PC-9 (cell line): ENCODE measurements at regions of chr16 and their contacts with region 1.

Region 1: DNA sequence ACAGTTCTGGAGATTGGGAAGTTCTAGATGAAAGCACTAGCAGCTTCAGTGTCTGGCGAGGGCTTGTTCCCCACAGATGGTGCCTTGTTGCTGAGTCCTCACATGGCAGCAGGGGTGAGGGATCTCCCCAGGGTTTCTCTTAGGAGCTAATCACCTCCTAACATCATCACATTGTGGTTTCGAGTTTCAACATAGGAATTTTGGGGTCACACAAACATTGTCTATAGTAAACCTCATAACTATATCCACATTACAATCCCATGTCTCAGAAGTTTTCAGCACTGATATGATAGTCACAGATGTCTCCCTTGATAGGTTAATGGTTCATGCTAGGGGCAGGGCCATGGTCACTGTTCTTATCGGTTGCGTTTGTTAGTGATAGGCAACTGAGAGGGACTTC is 13.8 kb downstream of the CLUAP1 start:
- DNase-seq: peak; percentile 68 to 94
- H3K4me3 ChIP-seq: no peak overlapping the region
- H3K27ac ChIP-seq: peak overlapping the region; percentile 59
- H3K4me1 ChIP-seq: peaks cover 35% of the 10 kb centered on the region
- H3K27me3 ChIP-seq: no peaks in the 10 kb centered on the region
- CTCF ChIP-seq: no peak

Region 2: GRCh38 chr16:3274490-3274889 is 240.1 kb before region 1 on chr16:
- CTCF ChIA-PET with region 1: interaction called, 11 read pairs
- POLR2A ChIA-PET with region 1: no interaction called
- intact Hi-C with region 1: no loop called
- DNase-seq: peak in 1 of 2 experiments; percentile 37
- H3K4me3 ChIP-seq: no peak overlapping the region
- H3K27ac ChIP-seq: no peak overlapping the region
- H3K4me1 ChIP-seq: no peaks in the 10 kb centered on the region
- H3K27me3 ChIP-seq: no peaks in the 10 kb centered on the region; the same call in 1 of the 2 replicates
- CTCF ChIP-seq: no peak

Region 3: DNA sequence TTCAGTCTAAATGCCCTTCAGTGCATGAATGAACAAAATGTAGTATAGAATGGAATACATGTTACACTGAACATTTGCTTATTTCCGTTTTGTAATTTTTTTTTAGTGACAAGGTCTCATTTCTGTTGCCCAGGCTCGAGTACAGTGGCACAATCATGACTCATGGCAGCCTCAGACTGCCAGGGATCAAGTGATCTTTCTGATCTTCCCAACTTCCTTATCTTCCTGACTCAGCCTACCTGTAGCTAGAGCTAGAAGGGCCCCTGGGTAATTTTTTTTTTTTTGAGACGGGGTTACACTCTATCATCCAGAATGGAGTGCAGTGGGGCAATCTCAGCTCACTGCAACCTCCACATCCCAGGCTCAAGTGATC is 104.1 kb after region 1 on chr16:
- CTCF ChIA-PET with region 1: no interaction called
- POLR2A ChIA-PET with region 1: interaction called, 38 read pairs
- intact Hi-C with region 1: no loop called
- DNase-seq: peak; percentile 59 to 79
- H3K4me3 ChIP-seq: no peak overlapping the region
- H3K27ac ChIP-seq: peak overlapping the region; percentile 61
- H3K4me1 ChIP-seq: peaks cover 13% of the 10 kb centered on the region; the same call in 1 of the 2 replicates
- H3K27me3 ChIP-seq: no peaks in the 10 kb centered on the region
- CTCF ChIP-seq: no peak

Region 4: GRCh38 chr16:3872216-3872895 is 357.7 kb after region 1 on chr16:
- CTCF ChIA-PET with region 1: interaction called, 19 read pairs
- POLR2A ChIA-PET with region 1: no interaction called
- intact Hi-C with region 1: no loop called
- DNase-seq: no peak
- H3K4me3 ChIP-seq: no peak overlapping the region
- H3K27ac ChIP-seq: 0 out of 2 replicates have a peak overlapping the region, but pooled peaks have one; percentile 18
- H3K4me1 ChIP-seq: peaks cover 25% of the 10 kb centered on the region
- H3K27me3 ChIP-seq: no peaks in the 10 kb centered on the region
- CTCF ChIP-seq: no peak